ENCODE measurements at regions of chr4 and their contacts with region 1.

Region 1: DNA sequence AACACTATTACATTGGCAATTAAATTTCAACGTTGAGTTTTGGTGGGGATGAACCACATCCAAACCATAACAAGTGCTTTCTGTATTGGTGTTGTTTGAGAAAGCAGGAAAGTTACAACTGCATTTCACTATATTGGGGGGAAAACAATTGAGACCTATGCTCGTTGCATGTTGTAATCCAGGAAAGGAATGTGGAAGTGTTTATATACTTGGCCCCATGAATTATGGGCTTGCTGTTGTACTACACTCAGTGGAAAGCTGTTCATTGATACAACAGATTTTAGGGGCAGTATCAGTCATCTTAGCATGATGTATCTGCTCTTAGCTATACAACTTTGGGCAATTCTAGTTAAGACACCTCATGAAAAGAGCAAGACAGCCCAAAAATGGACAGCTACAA is 52.4 kb downstream of the KLHL5 start:
- DNase-seq: no peak
- H3K4me3 ChIP-seq: no peak overlapping the region
- H3K27ac ChIP-seq: no peak overlapping the region
- H3K4me1 ChIP-seq: no peaks in the 10 kb centered on the region
- H3K27me3 ChIP-seq: no peaks in the 10 kb centered on the region
- CTCF ChIP-seq: no peak
- POLR2A ChIP-seq: no peak

Region 2: GRCh38 chr4:39014028-39014427 is 100.4 kb before region 1 on chr4:
- intact Hi-C with region 1: no loop called
- DNase-seq: no peak
- H3K4me3 ChIP-seq: no peak overlapping the region
- H3K27ac ChIP-seq: no peak overlapping the region
- H3K4me1 ChIP-seq: no peaks in the 10 kb centered on the region
- H3K27me3 ChIP-seq: no peaks in the 10 kb centered on the region
- CTCF ChIP-seq: no peak
- POLR2A ChIP-seq: no peak

Region 3: DNA sequence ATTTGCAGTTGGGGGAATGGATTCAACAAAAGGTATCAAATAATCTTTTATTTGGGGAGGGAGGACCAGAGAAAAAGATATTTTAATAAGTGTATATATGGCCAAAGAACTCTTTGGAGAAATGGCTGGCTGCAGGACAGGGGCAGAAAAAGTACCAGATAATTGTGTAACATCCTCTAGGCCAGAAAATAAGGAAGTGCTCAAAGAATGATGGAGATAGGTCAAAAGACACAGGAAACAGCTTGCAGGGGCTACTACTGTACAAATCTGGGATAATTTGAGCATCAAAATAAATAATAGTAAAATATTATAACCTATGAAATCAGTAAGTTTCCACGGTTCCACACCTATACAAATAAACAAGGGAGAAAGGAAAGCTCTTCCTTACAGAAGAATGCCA is 17.6 kb before region 1 on chr4:
- intact Hi-C with region 1: no loop called
- DNase-seq: no peak
- H3K4me3 ChIP-seq: no peak overlapping the region
- H3K27ac ChIP-seq: no peak overlapping the region
- H3K4me1 ChIP-seq: no peaks in the 10 kb centered on the region
- H3K27me3 ChIP-seq: no peaks in the 10 kb centered on the region
- CTCF ChIP-seq: no peak
- POLR2A ChIP-seq: no peak

Region 4: GRCh38 chr4:39124885-39125599 is 10.6 kb after region 1 on chr4:
- intact Hi-C with region 1: loop called (anchors 1 kb)
- DNase-seq: no peak
- H3K4me3 ChIP-seq: no peak overlapping the region
- H3K27ac ChIP-seq: no peak overlapping the region
- H3K4me1 ChIP-seq: no peaks in the 10 kb centered on the region
- H3K27me3 ChIP-seq: no peaks in the 10 kb centered on the region
- CTCF ChIP-seq: no peak
- POLR2A ChIP-seq: no peak

Measured in breast epithelium (tissue), 4 donors.